Calu3 (cell line): ENCODE measurements at regions of chr12 and their contacts with region 1.

Region 1: GRCh38 chr12:127013197-127013596 is 1253.8 kb upstream of the TMEM132C start:
- DNase-seq: no peak
- H3K4me3 Mint-ChIP-seq: no peak overlapping the region
- H3K27ac Mint-ChIP-seq: no peak overlapping the region
- H3K4me1 Mint-ChIP-seq: no peaks in the 10 kb centered on the region
- H3K27me3 Mint-ChIP-seq: no peaks in the 10 kb centered on the region
- CTCF ChIP-seq: no peak

Region 2: GRCh38 chr12:126944684-126945083 is 68.5 kb before region 1 on chr12:
- CTCF ChIA-PET with region 1: no interaction called
- intact Hi-C with region 1: no loop called
- DNase-seq: no peak
- H3K4me3 Mint-ChIP-seq: no peak overlapping the region
- H3K27ac Mint-ChIP-seq: no peak overlapping the region
- H3K4me1 Mint-ChIP-seq: no peaks in the 10 kb centered on the region
- H3K27me3 Mint-ChIP-seq: no peaks in the 10 kb centered on the region
- CTCF ChIP-seq: no peak

Region 3: DNA sequence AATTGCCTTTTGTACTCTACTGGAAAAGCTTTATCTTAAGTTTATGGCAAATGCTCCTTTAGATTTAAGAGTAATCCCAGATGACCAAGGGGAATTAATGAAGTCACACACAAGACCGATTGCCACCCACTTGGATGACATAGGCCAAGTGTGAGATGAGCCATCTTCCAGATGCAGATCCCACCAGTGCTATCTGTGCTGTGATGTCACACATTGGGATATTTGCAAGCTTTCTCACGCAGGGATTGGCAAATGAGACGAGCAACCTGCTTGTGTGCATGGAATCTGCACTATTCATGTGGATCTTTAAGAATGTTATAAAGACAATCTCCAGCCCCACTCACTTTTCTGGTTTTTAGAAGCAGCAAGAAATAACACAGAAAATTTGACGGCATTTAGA is 651.7 kb after region 1 on chr12:
- CTCF ChIA-PET with region 1: interaction called, 10 read pairs
- intact Hi-C with region 1: no loop called
- DNase-seq: no peak
- H3K4me3 Mint-ChIP-seq: no peak overlapping the region
- H3K27ac Mint-ChIP-seq: no peak overlapping the region
- H3K4me1 Mint-ChIP-seq: no peaks in the 10 kb centered on the region
- H3K27me3 Mint-ChIP-seq: no peaks in the 10 kb centered on the region
- CTCF ChIP-seq: no peak